ENCODE measurements at regions of chr2 and their contacts with region 1.

Region 1: GRCh38 chr2:239393388-239394340 is 7.2 kb downstream of the HDAC4 start:
- DNase-seq: peak in 1 of 2 donors; percentile 65
- H3K4me3 ChIP-seq: no peak overlapping the region
- H3K27ac ChIP-seq: no peak overlapping the region
- H3K4me1 ChIP-seq: peaks cover 0 to 25% (median 7%) of the 10 kb centered on the region in 4 donors
- H3K27me3 ChIP-seq: no peaks in the 10 kb centered on the region
- CTCF ChIP-seq: no peak

Region 2: GRCh38 chr2:239164335-239164871 is 229.3 kb before region 1 on chr2:
- intact Hi-C with region 1: loop called (anchors 5 kb)
- DNase-seq: peak; percentile 10 to 33
- H3K4me3 ChIP-seq: no peak overlapping the region
- H3K27ac ChIP-seq: no peak overlapping the region
- H3K4me1 ChIP-seq: no peaks in the 10 kb centered on the region
- H3K27me3 ChIP-seq: no peaks in the 10 kb centered on the region
- CTCF ChIP-seq: no peak

Region 3: GRCh38 chr2:239303711-239304532 is 89.7 kb before region 1 on chr2:
- intact Hi-C with region 1: no loop called
- DNase-seq: peak in 1 of 2 donors; percentile 53
- H3K4me3 ChIP-seq: no peak overlapping the region
- H3K27ac ChIP-seq: no peak overlapping the region
- H3K4me1 ChIP-seq: peaks cover 0 to 16% (median 5%) of the 10 kb centered on the region in 4 donors
- H3K27me3 ChIP-seq: no peaks in the 10 kb centered on the region
- CTCF ChIP-seq: no peak

Region 4: DNA sequence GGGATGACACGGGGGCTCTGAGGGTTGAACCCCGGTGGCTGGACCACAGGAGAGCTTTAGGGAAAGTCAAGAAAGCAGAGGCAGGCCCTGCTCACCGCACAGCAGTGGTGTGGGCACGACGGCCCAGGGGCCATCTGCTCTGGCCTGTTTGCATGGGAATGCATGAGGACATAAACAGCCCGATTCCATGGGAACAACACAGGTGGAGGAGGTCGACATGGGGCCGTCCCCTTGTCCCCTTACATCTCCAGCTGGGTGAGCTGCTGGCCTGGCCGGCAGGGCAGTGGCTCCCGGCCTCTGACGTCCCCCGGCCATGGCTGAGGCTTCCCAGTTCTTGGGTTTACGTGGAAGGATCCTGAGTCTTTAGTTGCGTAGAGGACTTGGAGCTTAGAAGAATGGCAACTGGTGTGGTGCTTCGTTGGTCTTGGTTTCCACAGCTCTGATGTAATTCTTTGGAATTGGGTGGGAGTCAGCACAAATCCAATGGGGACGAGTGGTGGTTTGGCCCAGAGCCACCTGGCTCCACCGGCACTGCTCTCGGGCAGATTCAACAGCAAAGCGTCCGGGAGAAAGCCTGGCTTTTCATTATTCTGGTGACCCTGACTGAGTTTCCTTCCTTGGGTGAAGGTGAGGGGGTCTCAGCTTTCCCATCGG is 105.4 kb after region 1 on chr2:
- intact Hi-C with region 1: no loop called
- DNase-seq: peak; percentile 68 to 80
- H3K4me3 ChIP-seq: no peak overlapping the region
- H3K27ac ChIP-seq: no peak overlapping the region
- H3K4me1 ChIP-seq: peaks cover 0 to 12% (median 7%) of the 10 kb centered on the region in 4 donors
- H3K27me3 ChIP-seq: peaks cover 0 to 21% of the 10 kb centered on the region in 2 donors
- CTCF ChIP-seq: no peak

Region 5: DNA sequence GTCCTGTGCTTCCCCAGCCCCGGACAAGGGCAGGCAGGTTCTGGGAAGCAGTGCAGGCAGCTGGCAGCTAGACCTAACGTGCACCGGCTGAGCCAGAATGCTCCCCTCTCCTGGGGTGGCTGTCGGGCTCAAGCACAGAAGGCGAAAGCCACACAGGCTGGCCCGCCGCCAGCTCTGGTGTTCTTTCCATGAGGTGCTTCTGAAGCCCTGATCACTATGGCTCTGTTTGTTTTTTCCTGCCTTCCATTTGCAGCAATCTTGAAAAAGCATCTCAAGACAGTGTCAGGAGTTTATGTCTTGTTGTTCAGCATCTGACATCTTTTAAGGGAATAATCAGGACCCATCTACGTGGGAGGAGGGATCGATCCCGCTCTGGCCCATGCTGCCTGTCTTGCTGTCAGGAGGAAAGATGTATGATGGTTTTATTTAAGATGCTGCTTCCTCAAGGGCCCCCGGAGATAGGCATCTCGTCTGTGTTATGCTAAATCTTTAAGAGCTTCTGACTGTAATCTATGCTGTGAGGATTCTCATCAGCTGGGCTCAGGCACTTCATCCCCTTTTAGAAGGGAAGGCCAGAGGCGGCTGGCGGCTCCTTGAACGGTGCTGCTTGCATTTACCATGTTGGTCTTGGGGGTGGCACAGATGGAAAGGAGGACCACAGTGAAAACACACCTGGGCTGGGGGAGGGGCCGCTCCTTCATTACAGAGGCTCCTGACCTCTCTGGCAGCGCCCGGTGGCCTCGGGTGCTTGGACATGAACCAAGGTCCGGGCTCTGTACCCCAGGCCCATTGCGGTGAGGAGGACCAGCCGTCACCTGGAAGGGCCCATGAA is 125.6 kb after region 1 on chr2:
- intact Hi-C with region 1: no loop called
- DNase-seq: no peak
- H3K4me3 ChIP-seq: no peak overlapping the region
- H3K27ac ChIP-seq: no peak overlapping the region
- H3K4me1 ChIP-seq: no peaks in the 10 kb centered on the region
- H3K27me3 ChIP-seq: peaks cover 0 to 25% of the 10 kb centered on the region in 2 donors
- CTCF ChIP-seq: no peak

Measured in tibial artery (tissue), 4 donors.